ENCODE measurements at regions of chr1 and their contacts with region 1.

Region 1: DNA sequence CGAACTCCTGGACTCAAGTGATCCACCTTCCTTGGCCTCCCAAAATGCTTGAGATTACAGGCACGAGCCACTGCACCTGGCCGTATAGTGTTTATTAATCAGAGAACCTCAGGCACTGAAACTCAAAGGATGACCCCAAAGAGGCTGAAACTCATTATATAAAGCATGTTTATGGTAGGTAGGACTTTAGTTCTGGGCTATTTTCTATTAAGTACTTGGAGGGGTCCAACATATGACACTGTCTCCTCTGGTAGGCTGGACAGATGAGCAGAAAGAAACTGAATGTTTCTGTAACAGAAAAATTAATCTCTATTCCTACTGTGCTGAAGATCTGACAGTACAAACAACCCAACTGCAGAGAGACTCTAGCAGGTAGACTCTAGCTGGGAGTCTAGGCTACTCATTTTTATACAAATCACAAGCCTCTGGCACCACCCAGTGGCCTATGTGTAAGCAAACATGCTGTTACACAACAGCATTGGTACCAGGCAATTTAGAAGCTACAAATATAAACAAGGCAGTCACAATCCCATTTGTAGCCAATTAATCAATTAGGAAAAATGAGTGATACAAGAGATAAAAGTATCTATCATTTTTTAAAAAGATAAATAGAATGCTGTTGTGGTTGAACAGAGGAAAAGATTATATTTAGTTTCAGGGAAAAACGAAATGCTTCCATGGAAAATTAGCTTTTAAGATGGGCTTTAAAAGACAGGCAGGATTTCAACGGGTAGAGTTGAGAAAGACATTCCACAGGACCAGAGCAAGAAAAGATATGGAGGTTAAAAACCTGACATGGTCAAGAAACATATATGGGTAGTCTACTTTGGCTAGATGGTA is 10.4 kb downstream of the DCAF8 start:
- DNase-seq: peak; percentile 74
- H3K4me3 Mint-ChIP-seq: no peak overlapping the region
- H3K27ac Mint-ChIP-seq: no peak overlapping the region
- H3K4me1 Mint-ChIP-seq: peaks cover 5% of the 10 kb centered on the region
- H3K27me3 Mint-ChIP-seq: no peaks in the 10 kb centered on the region

Region 2: DNA sequence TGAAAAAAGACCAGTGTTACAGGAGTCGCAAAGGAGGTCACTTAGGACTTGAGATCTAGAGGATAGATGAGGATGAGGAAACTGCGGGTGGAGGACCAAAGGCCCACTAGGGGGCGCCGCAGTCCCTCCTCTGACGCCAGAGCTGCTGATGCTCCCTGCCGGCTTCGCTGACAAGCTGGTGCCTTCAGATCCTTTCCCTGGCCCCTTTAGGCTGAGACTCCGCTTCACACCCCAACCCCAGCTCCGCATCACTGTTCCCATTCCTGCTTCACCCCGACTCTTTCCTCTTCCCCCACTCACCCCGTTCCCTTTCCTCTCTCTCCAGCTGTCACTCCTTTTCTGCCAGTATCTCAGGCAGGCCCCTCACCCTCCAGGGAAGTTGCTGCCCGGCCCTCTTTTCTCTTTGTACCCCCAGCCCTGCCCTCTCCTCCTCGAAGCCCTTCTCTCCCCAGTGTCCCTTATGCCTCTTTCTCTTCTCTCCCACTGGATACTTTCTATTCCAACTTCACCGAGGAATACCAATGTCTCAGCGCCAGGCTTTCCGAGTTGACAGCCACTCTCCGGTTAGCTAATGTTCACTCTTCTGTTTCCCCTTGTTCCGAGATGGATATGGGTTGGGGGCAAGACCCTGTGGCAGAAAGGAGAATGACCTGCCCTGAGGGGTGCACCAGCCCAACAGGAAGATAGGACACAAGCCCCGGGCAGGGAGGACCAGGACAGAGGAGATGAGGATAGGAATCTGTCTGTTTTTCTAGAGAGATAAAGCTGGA is 166.0 kb before region 1 on chr1:
- CTCF ChIA-PET with region 1: interaction called, 27 read pairs
- DNase-seq: peak; percentile 85
- H3K4me3 Mint-ChIP-seq: no peak overlapping the region
- H3K27ac Mint-ChIP-seq: no peak overlapping the region
- H3K4me1 Mint-ChIP-seq: peaks cover 12% of the 10 kb centered on the region
- H3K27me3 Mint-ChIP-seq: peaks cover 32% of the 10 kb centered on the region

Region 3: DNA sequence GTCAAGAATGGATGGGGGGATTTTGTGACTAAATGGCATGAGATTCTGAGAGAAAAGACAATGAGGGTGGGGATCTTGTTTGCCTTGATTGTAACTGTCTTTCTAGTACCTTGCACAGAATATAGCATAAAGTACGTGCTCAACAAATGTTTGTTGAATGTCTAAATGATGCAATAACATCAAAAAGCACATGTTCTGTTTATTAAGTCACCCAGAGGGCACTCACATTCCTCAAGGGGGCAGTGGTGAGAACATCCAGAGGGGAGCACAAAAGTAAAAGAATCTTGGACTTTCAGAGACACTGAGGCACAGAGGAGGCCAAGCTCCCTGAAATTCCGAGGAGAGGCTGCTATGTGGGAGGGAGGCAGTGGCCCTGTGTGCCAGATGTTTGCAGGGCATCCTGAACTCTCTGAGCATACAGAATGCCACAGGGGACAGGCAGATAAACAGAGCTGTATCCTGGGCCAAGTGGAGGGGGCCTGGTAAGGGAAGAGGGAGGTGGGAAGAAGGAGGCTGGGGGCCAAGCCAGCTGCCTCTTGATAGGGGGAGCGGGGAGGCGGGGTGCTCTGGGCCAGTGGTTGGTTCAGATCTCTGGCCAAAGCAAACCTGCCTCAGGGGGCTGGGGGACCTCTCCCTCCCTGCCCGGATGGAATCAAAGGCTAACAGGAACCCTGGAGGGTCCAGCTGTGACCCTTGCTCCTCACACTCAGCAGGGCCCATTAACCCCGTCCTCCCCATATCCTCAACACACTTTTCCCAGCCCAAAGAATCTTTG is 142.8 kb before region 1 on chr1:
- CTCF ChIA-PET with region 1: interaction called, 16 read pairs
- DNase-seq: peak; percentile 59
- H3K4me3 Mint-ChIP-seq: no peak overlapping the region
- H3K27ac Mint-ChIP-seq: peak overlapping the region; percentile 43
- H3K4me1 Mint-ChIP-seq: no peaks in the 10 kb centered on the region
- H3K27me3 Mint-ChIP-seq: peaks cover 49% of the 10 kb centered on the region

Region 4: DNA sequence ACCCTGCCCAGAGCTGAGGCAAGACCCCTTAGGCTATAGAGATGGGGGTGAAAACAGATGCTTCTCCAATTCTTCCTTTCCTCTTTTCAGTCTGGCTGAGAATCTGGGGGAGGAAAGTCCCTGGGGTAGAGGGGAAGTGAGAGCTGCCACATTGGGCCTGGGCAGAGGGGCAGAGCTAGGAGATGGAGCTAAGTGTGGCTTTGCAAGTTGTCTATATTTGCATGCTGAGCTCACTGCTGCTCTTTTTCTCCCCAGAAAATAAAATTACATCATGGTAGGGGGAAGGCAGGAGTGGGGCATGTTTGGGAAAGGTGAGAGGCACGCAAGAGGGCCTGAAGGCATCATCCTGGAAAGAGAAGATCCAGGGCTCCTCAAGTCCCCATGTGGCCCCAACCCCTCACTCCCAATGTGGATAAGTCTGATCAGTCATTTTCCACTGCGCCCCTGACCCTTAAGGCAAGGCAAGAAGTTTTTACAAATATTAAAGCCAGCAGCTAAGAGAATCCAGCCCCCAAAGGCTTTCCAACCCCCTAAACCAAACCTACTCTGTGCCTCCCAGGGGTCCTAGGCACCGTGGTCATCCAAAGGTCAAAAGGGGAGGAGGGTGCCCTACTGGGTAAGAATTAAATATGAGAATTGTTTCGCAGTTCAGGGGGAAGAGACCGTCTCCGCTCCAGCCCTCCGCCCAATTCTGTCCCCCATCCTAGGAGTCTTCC is 47.2 kb before region 1 on chr1:
- CTCF ChIA-PET with region 1: interaction called, 16 read pairs
- DNase-seq: no peak
- H3K4me3 Mint-ChIP-seq: peak overlapping the region; percentile 88
- H3K27ac Mint-ChIP-seq: peak overlapping the region; percentile 22
- H3K4me1 Mint-ChIP-seq: peaks cover 30% of the 10 kb centered on the region
- H3K27me3 Mint-ChIP-seq: no peaks in the 10 kb centered on the region

Region 5: DNA sequence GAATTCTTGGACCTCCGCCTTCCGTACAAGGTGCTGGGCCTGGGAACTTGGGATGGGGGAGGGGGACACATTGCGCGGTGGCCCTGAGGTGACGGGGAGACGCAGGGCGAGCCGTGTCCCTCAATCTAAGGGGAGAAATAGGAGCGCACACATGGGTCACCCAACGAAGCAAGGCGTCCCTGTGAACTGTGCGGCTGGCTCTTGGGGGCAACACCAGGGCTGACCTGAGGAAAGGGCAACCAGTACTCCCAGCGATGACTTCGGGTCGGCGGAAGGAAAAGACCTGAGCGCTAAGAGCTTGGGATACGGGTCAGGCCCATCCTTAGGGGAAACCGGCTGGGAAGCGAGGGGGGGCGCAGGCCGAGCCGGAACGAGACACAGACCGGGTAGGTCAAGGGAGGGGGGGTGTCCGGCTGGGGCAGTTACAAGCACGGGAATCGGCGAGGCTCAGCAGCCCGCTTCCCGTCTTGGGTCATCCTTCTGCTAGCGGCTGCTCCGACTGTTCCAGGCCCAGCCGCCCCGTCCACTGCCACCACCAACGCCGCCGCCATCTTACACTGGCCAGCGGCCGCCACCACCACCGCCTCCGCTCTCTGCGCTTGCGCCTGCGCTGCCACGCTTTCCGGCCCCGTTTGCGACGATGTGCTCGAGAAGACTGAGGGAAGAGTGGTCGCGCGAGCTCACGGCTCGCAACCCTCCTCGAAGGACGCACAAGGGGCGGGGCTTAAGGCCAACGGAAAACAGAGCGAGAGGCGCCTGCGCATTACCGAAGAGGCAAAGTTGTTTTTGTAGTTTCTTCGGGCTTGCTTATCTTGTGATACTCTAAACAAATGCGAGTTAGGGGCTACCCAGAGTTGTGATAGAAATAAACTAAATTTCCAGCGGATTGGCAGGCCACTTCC is 10.2 kb after region 1 on chr1 and contains the start of gene DCAF8:
- CTCF ChIA-PET with region 1: interaction called, 29 read pairs
- DNase-seq: peak; percentile 99
- H3K4me3 Mint-ChIP-seq: peak within 1 kb of the TSS; percentile 94
- H3K27ac Mint-ChIP-seq: peak within 1 kb of the TSS; percentile 99
- H3K4me1 Mint-ChIP-seq: peaks cover 39% of the 10 kb centered on the region
- H3K27me3 Mint-ChIP-seq: peaks cover 4% of the 10 kb centered on the region

Region 6: GRCh38 chr1:160291248-160292220 is 39.6 kb after region 1 on chr1:
- CTCF ChIA-PET with region 1: interaction called, 37 read pairs
- DNase-seq: peak; percentile 81
- H3K4me3 Mint-ChIP-seq: no peak overlapping the region
- H3K27ac Mint-ChIP-seq: peak overlapping the region; percentile 35
- H3K4me1 Mint-ChIP-seq: no peaks in the 10 kb centered on the region
- H3K27me3 Mint-ChIP-seq: no peaks in the 10 kb centered on the region

Region 7: GRCh38 chr1:160342953-160343869 is 91.3 kb after region 1 on chr1 and contains the starts of genes COPA and NCSTN:
- CTCF ChIA-PET with region 1: no interaction called
- DNase-seq: peak; percentile 94
- H3K4me3 Mint-ChIP-seq: peak within 1 kb of the TSS; percentile 100
- H3K27ac Mint-ChIP-seq: peak within 1 kb of the TSS; percentile 98
- H3K4me1 Mint-ChIP-seq: peaks cover 46% of the 10 kb centered on the region
- H3K27me3 Mint-ChIP-seq: no peaks in the 10 kb centered on the region